Heart right ventricle (tissue), 16 donors: ENCODE measurements at regions of chr11 and their contacts with region 1.

Region 1: DNA sequence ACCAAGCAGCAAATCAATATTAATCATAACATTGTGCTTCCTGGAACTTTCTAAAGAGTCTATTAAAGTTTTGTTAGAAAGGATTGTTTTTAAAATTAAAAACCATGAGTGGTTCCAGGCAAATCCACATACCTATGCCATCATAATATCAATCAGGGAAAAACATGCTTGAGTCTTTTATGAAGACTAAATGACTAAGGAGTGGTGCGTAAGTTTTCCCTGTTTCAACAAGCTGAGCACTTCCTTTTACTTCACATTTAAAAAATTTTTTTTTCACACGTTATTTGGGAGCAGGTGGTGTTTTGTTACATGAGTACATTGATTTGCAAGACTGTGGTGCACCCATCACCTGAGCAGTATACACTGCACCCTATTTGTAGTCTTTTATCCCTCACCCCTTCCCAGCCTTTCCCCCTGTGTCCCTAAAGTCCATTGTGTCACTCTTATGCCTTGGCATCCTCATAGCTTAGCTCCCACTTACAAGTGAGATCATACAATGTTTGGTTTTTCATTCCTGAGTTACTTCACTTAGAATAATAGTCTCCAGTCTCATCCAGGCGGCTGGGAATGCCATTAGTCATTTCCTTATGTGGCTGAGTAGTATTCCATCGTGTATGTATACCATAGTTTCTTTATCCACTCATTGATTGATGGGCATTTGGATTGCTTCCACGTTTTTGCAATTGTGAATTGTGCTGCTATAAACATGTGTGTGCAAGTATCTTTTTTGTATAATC is 1190.3 kb upstream of the RAG2 start:
- DNase-seq: no peak
- ATAC-seq: no peak
- H3K4me3 ChIP-seq: no peak overlapping the region
- H3K27ac ChIP-seq: no peak overlapping the region
- H3K4me1 ChIP-seq: no peaks in the 10 kb centered on the region
- H3K27me3 ChIP-seq: no peaks in the 10 kb centered on the region
- CTCF ChIP-seq: no peak

Region 2: DNA sequence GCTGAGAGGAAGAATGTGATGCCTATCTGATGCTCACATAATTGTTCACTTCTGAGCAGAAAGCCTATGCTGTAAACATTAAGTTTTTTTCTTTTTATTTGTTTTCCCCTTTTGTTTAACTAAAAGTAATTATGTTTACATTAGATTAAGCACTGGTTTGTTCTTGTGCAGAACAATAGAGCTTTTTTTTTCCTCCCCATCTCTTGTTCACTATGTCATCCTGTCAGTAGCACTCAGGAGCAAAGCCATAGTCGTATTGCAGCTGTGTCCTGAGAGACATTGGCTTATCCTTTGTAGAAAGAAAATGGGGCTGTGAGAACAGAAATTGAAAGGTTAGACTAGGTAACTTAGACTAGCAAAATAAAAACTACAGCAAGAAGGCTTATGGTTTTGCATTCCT is 888.5 kb before region 1 on chr11:
- intact Hi-C with region 1: no loop called
- DNase-seq: no peak
- ATAC-seq: no peak
- H3K4me3 ChIP-seq: no peak overlapping the region
- H3K27ac ChIP-seq: no peak overlapping the region
- H3K4me1 ChIP-seq: no peaks in the 10 kb centered on the region
- H3K27me3 ChIP-seq: no peaks in the 10 kb centered on the region
- CTCF ChIP-seq: no peak

Region 3: DNA sequence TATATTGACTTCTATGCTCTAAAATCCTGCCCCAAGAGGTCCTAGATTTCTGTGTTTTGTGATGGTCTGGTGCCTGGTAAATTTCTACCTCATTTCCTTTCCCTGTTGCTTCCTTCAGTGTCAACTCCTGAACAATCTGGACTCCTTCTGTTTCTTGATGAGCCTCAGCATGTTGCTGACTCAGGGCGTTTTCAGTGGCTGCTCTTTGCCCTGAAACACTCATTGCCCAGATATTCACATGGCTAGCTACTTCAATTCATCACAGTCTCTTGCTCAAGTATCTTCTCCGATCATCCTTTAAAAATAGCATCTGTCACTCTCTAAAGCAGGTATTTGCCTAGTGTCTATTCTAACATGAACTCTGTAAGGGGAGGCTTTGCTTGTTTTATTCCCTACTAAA is 663.9 kb before region 1 on chr11:
- intact Hi-C with region 1: no loop called
- DNase-seq: no peak
- ATAC-seq: no peak
- H3K4me3 ChIP-seq: no peak overlapping the region
- H3K27ac ChIP-seq: no peak overlapping the region
- H3K4me1 ChIP-seq: no peaks in the 10 kb centered on the region
- H3K27me3 ChIP-seq: no peaks in the 10 kb centered on the region
- CTCF ChIP-seq: no peak

Region 4: GRCh38 chr11:37306563-37306962 is 481.7 kb before region 1 on chr11:
- intact Hi-C with region 1: no loop called
- DNase-seq: no peak
- ATAC-seq: no peak
- H3K4me3 ChIP-seq: no peak overlapping the region
- H3K27ac ChIP-seq: no peak overlapping the region
- H3K4me1 ChIP-seq: no peaks in the 10 kb centered on the region
- H3K27me3 ChIP-seq: no peaks in the 10 kb centered on the region
- CTCF ChIP-seq: no peak

Region 5: GRCh38 chr11:37849706-37850105 is 61.4 kb after region 1 on chr11:
- intact Hi-C with region 1: loop called in 1 of 10 experiments (anchors 10 kb)
- DNase-seq: no peak
- ATAC-seq: no peak
- H3K4me3 ChIP-seq: no peak overlapping the region
- H3K27ac ChIP-seq: no peak overlapping the region
- H3K4me1 ChIP-seq: no peaks in the 10 kb centered on the region
- H3K27me3 ChIP-seq: no peaks in the 10 kb centered on the region
- CTCF ChIP-seq: no peak